ENCODE measurements at regions of chr5 and their contacts with region 1.

Region 1: DNA sequence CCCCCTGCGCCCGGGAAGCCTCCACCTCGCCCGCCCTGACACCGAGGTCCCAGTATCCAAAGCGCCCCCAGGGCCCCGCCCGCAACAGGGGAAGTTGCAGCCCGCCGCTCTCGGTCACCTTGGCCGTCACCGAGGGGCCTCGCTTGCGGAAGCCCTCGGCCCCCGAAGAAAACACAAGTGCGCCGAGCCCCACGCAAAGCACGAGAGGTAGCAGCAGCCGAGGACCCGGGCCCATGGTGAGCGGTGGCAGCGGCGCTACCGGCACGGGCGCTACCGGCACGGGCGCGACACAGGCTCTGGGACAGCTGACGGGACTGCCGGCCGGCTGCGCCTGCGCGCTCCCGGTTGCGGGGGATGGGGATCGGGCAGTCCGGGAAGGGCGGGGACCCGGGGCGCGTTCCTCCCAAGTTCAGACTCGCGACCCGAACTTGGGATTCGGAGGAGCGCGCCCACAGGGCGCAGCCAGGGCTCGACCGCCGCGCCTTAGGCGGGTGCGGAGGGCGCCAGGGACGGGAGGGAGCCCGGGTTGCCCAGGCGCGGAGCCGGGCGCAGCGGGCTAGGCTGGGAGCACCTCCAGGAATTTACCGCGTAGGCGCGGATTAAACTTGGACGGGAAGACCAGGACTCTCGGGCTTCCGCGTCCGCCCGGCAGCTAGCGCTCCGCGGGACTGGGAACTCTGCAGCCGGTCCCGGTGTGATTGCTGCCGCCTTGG is at the start of gene PPIC:
- DNase-seq: peak; percentile 86
- H3K4me3 ChIP-seq: peak within 1 kb of the TSS; percentile 77 to 90 (median 85)
- H3K27ac ChIP-seq: peak within 1 kb of the TSS; percentile 44
- H3K4me1 ChIP-seq: peaks cover 8% of the 10 kb centered on the region
- H3K27me3 ChIP-seq: no peaks in the 10 kb centered on the region
- CTCF ChIP-seq: no peak
- POLR2A ChIP-seq: peak; percentile 82
- total RNA-seq, gene PPIC: 26.5 TPM in 2 replicates

Region 2: DNA sequence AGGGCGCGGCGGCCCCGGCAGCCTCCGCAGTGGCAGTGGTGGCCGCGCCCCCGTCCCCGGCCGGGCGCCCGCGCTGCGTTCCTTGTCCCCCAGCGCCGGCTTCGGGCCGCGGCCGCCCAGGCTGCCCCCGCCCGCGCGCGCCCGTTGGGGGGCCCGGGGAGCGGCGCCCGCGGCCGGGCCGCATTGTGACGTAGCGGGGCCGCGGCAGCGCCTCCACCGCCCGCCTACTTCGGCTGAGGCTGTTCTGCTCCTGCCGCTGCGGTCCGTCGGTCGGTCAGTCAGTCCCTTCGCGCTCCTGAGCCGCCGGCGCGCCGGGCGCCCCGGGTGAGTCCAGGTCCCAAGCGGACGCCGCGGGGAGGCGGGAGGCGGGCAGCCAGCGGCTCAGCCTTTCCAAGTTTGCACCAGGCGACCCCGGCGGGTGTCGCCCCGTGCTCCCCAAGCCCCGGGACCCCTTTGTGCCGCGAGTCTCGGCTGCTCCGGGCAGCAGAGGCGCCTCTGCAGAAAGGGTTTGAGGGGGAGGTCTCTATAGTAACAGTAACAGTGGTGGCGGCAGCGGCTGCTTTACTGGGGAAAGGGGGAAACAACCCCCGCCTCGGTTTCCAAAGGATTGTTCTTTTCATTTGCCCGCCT is 724.5 kb before region 1 on chr5 and contains the start of gene SNCAIP:
- CTCF ChIA-PET with region 1: no interaction called
- POLR2A ChIA-PET with region 1: no interaction called
- dilution Hi-C with region 1: no loop called
- intact Hi-C with region 1: loop called (anchors 10 kb)
- DNase-seq: peak; percentile 58
- H3K4me3 ChIP-seq: peak within 1 kb of the TSS; percentile 59 to 89 (median 81)
- H3K27ac ChIP-seq: peak within 1 kb of the TSS; percentile 62
- H3K4me1 ChIP-seq: peaks cover 25% of the 10 kb centered on the region
- H3K27me3 ChIP-seq: no peaks in the 10 kb centered on the region
- CTCF ChIP-seq: no peak
- POLR2A ChIP-seq: no peak
- total RNA-seq, gene SNCAIP: 35.9 and 42.0 TPM in 2 replicates

Region 3: DNA sequence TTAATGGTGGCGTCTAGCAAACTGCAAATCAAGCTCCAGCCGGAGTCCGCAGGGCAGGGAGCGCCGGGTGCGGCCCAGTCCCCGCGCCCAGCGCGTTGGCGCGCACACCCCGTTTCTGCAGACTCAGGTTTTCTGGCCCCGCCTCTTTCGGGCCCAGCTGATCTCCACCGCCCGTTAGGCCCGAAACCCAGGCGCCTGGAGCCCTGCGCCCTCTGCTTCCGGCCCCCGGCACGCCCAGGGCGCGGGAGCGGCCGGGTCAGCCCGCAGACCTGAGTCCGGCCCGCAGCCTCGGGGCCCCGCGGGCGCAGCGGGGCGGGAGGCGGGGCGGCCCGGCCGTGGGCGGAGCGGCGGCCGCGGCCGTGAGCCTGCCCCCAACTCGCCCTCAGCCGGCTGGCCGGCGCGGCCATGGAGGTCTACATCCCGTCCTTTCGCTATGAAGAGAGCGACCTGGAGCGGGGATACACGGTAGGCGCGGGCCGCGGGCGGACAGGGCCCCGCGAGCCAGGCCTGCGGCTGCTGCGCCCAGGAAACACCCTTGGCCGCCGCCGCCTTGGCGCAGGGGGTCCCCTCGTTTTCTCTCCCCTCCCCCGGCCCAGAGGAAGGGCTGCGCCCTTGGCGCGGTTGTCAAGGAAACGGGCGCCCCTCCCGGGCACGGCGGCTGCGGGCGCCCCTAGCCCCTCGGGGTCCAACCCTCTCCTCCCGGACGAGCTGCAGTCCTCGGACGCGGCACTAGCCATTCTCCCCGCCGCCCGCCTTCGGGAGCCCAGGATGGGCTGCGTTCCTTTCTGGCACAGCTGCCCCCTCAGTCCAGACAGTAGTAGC is 191.1 kb before region 1 on chr5 and contains the start of gene SNX24:
- CTCF ChIA-PET with region 1: no interaction called
- POLR2A ChIA-PET with region 1: no interaction called
- dilution Hi-C with region 1: no loop called
- intact Hi-C with region 1: loop called (anchors 2 kb)
- DNase-seq: peak; percentile 71
- H3K4me3 ChIP-seq: peak within 1 kb of the TSS; percentile 76 to 95 (median 93)
- H3K27ac ChIP-seq: peak within 1 kb of the TSS; percentile 0
- H3K4me1 ChIP-seq: peaks cover 18% of the 10 kb centered on the region
- H3K27me3 ChIP-seq: no peaks in the 10 kb centered on the region
- CTCF ChIP-seq: no peak
- POLR2A ChIP-seq: peak; percentile 73
- total RNA-seq, gene SNX24: 8.8 and 14.9 TPM in 2 replicates

Region 4: DNA sequence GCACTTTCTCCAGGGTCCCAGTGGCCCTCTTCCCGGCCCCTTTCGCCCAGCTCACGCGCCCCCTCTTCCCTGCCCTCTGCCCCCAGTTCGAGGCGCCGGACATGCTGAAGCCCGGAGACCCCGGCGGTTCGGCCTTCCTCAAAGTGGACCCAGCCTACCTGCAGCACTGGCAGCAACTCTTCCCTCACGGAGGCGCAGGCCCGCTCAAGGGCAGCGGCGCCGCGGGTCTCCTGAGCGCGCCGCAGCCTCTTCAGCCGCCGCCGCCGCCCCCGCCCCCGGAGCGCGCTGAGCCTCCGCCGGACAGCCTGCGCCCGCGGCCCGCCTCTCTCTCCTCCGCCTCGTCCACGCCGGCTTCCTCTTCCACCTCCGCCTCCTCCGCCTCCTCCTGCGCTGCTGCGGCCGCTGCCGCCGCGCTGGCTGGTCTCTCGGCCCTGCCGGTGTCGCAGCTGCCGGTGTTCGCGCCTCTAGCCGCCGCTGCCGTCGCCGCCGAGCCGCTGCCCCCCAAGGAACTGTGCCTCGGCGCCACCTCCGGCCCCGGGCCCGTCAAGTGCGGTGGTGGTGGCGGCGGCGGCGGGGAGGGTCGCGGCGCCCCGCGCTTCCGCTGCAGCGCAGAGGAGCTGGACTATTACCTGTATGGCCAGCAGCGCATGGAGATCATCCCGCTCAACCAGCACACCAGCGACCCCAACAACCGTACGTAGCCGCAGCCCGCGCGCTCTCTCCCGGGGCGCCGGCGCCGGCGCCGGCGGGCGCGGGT is 53.5 kb after region 1 on chr5:
- CTCF ChIA-PET with region 1: no interaction called
- POLR2A ChIA-PET with region 1: no interaction called
- dilution Hi-C with region 1: no loop called
- intact Hi-C with region 1: loop called (anchors 1 kb)
- DNase-seq: peak; percentile 13
- H3K4me3 ChIP-seq: peak overlapping the region; percentile 18 to 32 (median 21)
- H3K27ac ChIP-seq: no peak overlapping the region
- H3K4me1 ChIP-seq: peaks cover 16% of the 10 kb centered on the region
- H3K27me3 ChIP-seq: peaks cover 82 to 99% of the 10 kb centered on the region in 2 experiments
- CTCF ChIP-seq: no peak
- POLR2A ChIP-seq: no peak

Region 5: DNA sequence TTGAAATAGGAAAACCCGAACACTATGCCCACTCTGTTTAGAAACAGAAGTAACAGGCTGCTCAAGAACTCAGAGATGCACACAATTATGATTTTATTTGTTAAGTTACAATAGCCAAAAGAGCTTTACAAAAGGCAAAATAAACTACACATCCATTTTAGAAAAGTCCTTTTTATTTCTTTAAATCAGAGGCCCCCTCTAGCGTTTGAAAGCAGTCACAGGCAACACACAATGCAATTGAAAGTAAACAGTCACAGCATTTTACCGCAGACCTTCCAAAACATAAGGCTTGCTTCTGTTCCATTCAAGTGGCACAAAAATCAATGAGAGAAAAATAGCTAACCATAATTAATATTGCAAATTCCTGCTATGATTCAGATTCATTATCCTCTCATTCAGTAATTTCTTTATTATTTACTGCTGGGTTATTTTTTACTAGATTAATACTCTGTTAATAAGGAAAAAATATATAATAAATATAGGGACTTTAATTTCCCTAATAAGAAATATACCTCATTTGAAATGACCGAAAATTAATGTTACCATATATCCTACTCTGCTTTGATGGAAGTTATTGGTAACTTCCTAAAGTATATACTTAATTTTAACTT is 308.4 kb after region 1 on chr5:
- CTCF ChIA-PET with region 1: no interaction called
- POLR2A ChIA-PET with region 1: no interaction called
- dilution Hi-C with region 1: no loop called
- intact Hi-C with region 1: loop called (anchors 5 kb)
- DNase-seq: peak; percentile 45
- H3K4me3 ChIP-seq: no peak overlapping the region
- H3K27ac ChIP-seq: no peak overlapping the region
- H3K4me1 ChIP-seq: no peaks in the 10 kb centered on the region
- H3K27me3 ChIP-seq: no peaks in the 10 kb centered on the region
- CTCF ChIP-seq: peak; percentile 34 to 55
- POLR2A ChIP-seq: no peak

Region 6: DNA sequence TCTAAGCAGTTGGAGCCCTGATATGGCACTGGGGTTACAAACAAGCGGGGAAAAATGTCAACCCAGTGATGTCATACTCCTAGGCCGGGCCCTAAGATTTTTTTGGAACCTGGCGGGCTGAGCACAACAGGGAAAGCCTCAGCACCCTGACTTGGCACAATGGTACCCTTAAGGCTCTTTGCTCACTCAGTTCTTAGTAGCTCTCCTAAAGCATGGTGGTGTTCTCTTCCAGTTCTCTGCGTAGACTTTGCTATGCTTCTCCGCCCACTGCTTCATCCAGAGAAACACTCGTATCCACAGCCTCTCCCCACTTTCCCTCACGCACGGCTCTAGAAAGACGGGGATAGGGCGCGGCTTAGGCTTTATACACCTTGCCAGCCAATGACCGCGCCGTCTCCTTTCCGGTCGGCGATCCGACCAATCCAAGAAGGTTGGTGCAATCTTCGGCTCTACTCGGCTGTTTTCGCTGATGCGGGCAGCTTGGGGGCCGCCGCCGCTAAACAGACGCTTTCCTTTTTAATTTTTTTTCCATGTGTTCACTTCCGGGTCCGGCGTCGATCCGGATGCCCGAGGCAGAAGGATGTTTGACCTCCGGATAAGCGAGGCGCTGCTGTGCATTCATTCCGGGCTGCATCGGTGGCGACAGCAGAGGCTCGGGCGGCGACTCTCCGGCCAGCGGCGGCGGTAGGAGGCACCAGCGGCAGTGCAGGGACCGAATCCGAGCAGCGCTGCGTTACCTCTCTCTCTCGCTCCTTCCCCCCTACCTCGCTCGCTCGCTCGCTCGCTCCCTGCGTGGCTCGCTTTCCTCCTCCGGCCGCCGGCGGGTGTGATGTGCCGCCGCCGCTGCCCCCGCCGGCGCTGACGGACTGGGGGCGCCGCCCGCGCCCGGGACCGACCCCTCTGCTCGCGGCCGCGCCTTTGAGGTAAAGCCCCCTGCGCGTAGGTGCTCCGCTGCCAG is 475.4 kb after region 1 on chr5 and contains the start of gene CSNK1G3:
- CTCF ChIA-PET with region 1: no interaction called
- POLR2A ChIA-PET with region 1: no interaction called
- dilution Hi-C with region 1: no loop called
- intact Hi-C with region 1: loop called (anchors 5 kb)
- DNase-seq: peak; percentile 99
- H3K4me3 ChIP-seq: peak within 1 kb of the TSS; percentile 69 to 81 (median 74)
- H3K27ac ChIP-seq: peak within 1 kb of the TSS; percentile 62
- H3K4me1 ChIP-seq: peaks cover 10% of the 10 kb centered on the region
- H3K27me3 ChIP-seq: peaks cover 2 to 9% of the 10 kb centered on the region in 2 experiments
- CTCF ChIP-seq: no peak
- POLR2A ChIP-seq: peak; percentile 98
- total RNA-seq, gene CSNK1G3: 33.0 and 35.9 TPM in 2 replicates

Region 7: DNA sequence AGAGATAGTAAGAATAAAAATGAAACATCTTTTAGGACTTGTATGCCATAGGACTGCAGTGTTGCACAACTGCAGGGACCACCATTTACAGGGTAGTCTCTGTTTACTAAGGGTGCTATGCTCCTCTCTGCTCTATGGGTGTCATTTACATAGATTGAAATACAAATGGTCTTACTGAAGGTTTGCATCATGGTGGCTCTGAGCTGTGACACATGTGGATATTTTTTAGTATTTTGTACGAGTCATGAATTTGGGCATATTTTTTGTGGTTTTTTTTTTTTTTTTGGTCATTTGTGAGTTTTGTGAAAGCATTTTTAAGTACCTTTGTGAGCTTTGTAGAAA is 522.9 kb after region 1 on chr5:
- CTCF ChIA-PET with region 1: no interaction called
- POLR2A ChIA-PET with region 1: no interaction called
- dilution Hi-C with region 1: no loop called
- intact Hi-C with region 1: no loop called
- DNase-seq: no peak
- H3K4me3 ChIP-seq: no peak overlapping the region
- H3K27ac ChIP-seq: no peak overlapping the region
- H3K4me1 ChIP-seq: no peaks in the 10 kb centered on the region
- H3K27me3 ChIP-seq: no peaks in the 10 kb centered on the region
- CTCF ChIP-seq: no peak
- POLR2A ChIP-seq: no peak

Region 8: GRCh38 chr5:124935065-124935464 is 1898.5 kb after region 1 on chr5:
- CTCF ChIA-PET with region 1: no interaction called
- POLR2A ChIA-PET with region 1: no interaction called
- dilution Hi-C with region 1: no loop called
- intact Hi-C with region 1: no loop called
- DNase-seq: no peak
- H3K4me3 ChIP-seq: no peak overlapping the region
- H3K27ac ChIP-seq: no peak overlapping the region
- H3K4me1 ChIP-seq: no peaks in the 10 kb centered on the region
- H3K27me3 ChIP-seq: no peaks in the 10 kb centered on the region
- CTCF ChIP-seq: no peak
- POLR2A ChIP-seq: no peak

Measured in endothelial cell of umbilical vein (primary cell).